ENCODE measurements at regions of chr7 and their contacts with region 1.

Region 1: GRCh38 chr7:102412548-102412947 is 16.4 kb downstream of the PRKRIP1 start:
- DNase-seq: peak; percentile 54 to 71
- ATAC-seq: peak; percentile 91 to 96 (median 94)
- H3K4me3 ChIP-seq: no peak overlapping the region
- H3K27ac ChIP-seq: no peak overlapping the region
- H3K4me1 ChIP-seq: peaks cover 10% of the 10 kb centered on the region
- H3K27me3 ChIP-seq: no peaks in the 10 kb centered on the region
- CTCF ChIP-seq: peak; percentile 61

Region 2: GRCh38 chr7:102122026-102122425 is 290.5 kb before region 1 on chr7:
- intact Hi-C with region 1: no loop called
- DNase-seq: no peak
- ATAC-seq: no peak
- H3K4me3 ChIP-seq: no peak overlapping the region
- H3K27ac ChIP-seq: no peak overlapping the region
- H3K4me1 ChIP-seq: no peaks in the 10 kb centered on the region
- H3K27me3 ChIP-seq: no peaks in the 10 kb centered on the region
- CTCF ChIP-seq: no peak

Region 3: GRCh38 chr7:102450242-102450641 is 37.7 kb after region 1 on chr7:
- intact Hi-C with region 1: loop called in 1 of 2 experiments (anchors 5 kb)
- DNase-seq: no peak
- ATAC-seq: peak in 1 of 4 donors; percentile 43
- H3K4me3 ChIP-seq: no peak overlapping the region
- H3K27ac ChIP-seq: no peak overlapping the region
- H3K4me1 ChIP-seq: peaks cover 5% of the 10 kb centered on the region
- H3K27me3 ChIP-seq: no peaks in the 10 kb centered on the region
- CTCF ChIP-seq: peak; percentile 12

Region 4: GRCh38 chr7:102464577-102465280 is 52.2 kb after region 1 on chr7 and contains the starts of genes ALKBH4 and LRWD1:
- intact Hi-C with region 1: loop called in 1 of 2 experiments (anchors 5 kb)
- DNase-seq: peak; percentile 96 to 98
- ATAC-seq: peak; percentile 95 to 97 (median 96)
- H3K4me3 ChIP-seq: peak within 1 kb of the TSS; percentile 78
- H3K27ac ChIP-seq: peak within 1 kb of the TSS; percentile 71
- H3K4me1 ChIP-seq: peaks cover 15% of the 10 kb centered on the region
- H3K27me3 ChIP-seq: no peaks in the 10 kb centered on the region
- CTCF ChIP-seq: peak; percentile 17
- total RNA-seq, gene ALKBH4: 2.7 to 8.2 (median 6.5) TPM
- total RNA-seq, gene LRWD1: 10.4 to 15.6 (median 12.5) TPM

Region 5: GRCh38 chr7:103074519-103075336 is 662.2 kb after region 1 on chr7 and contains the starts of genes ARMC10 and FBXL13:
- intact Hi-C with region 1: no loop called
- DNase-seq: peak; percentile 91 to 95
- ATAC-seq: peak; percentile 97 to 98 (median 98)
- H3K4me3 ChIP-seq: peak within 1 kb of the TSS; percentile 90
- H3K27ac ChIP-seq: peak within 1 kb of the TSS; percentile 95
- H3K4me1 ChIP-seq: peaks cover 19% of the 10 kb centered on the region
- H3K27me3 ChIP-seq: no peaks in the 10 kb centered on the region
- CTCF ChIP-seq: peak; percentile 17
- total RNA-seq, gene ARMC10: 21.5 to 26.0 (median 24.1) TPM
- total RNA-seq, gene FBXL13: 0.42 to 0.52 (median 0.49) TPM in 3 of 4 donors, not detected in the other